PC-9 (cell line): ENCODE measurements at regions of chr6 and their contacts with region 1.

Region 1: DNA sequence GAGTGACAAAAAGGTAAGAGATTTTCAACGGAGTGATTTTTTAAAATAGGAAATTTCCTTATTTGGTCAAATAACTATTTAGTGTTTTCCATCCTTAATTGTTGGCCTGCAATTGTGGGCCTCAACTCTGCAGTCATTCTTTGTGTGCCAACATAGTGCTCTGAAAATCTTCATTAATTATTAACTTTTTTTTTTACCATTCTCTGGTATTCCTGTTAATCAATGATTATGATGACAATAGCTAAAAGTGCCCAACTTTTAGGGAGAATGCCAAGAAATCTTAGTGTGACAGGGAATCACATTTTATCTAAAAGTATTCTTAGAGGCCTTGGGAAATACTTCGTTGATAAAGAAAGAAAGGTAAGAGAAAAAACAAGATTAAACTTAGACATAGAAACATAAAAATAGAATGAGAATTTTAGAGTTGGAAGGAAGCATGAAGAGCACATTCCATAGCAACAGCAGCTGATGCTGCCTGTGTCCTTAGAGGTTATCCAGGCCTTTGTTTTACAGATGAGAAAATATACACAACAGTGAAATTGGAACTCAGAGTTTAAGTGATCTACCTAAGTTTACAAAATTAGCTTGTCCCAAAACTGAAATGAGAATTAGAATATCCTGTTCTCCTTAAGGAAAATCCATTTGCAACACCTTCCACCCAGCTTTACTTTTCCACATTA is 1.2 kb downstream of the GPRC6A start:
- DNase-seq: no peak
- H3K4me3 ChIP-seq: no peak overlapping the region
- H3K27ac ChIP-seq: no peak overlapping the region
- H3K4me1 ChIP-seq: no peaks in the 10 kb centered on the region
- H3K27me3 ChIP-seq: no peaks in the 10 kb centered on the region
- CTCF ChIP-seq: no peak

Region 2: DNA sequence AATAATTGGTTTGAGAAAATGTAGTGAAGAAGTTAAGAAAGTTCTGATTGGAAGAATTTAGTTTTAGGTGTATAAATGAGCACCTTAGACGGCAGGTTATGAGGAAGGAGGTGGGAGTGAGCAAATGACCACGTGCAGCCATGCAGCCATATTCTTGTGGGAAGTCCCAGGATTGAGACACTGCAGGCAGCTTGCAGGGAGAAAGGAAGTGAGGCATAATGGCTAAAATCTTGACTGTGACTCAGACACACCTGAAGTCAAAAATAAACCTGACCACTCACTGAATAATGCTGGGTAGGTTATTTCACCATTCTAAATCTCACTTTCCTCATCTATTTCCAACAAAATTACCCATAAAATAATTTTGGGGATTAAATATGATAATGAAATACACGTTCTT is 440.3 kb before region 1 on chr6:
- CTCF ChIA-PET with region 1: no interaction called
- POLR2A ChIA-PET with region 1: no interaction called
- intact Hi-C with region 1: no loop called
- DNase-seq: peak; percentile 29 to 76
- H3K4me3 ChIP-seq: peak overlapping the region; percentile 29; the same call in 1 of the 2 replicates
- H3K27ac ChIP-seq: peak overlapping the region; percentile 92
- H3K4me1 ChIP-seq: peaks cover 44% of the 10 kb centered on the region
- H3K27me3 ChIP-seq: no peaks in the 10 kb centered on the region
- CTCF ChIP-seq: no peak

Region 3: GRCh38 chr6:116764961-116765851 is 62.5 kb before region 1 on chr6 and contains the start of gene FAM162B:
- CTCF ChIA-PET with region 1: no interaction called
- POLR2A ChIA-PET with region 1: interaction called, 13 read pairs
- intact Hi-C with region 1: no loop called
- DNase-seq: no peak
- H3K4me3 ChIP-seq: no peak within 1 kb of the TSS
- H3K27ac ChIP-seq: no peak within 1 kb of the TSS
- H3K4me1 ChIP-seq: no peaks in the 10 kb centered on the region
- H3K27me3 ChIP-seq: no peaks in the 10 kb centered on the region
- CTCF ChIP-seq: no peak
- total RNA-seq, gene FAM162B: not detected in 2 replicates

Region 4: GRCh38 chr6:117298941-117299340 is 471.2 kb after region 1 on chr6:
- CTCF ChIA-PET with region 1: no interaction called
- POLR2A ChIA-PET with region 1: no interaction called
- intact Hi-C with region 1: no loop called
- DNase-seq: no peak
- H3K4me3 ChIP-seq: no peak overlapping the region
- H3K27ac ChIP-seq: no peak overlapping the region
- H3K4me1 ChIP-seq: no peaks in the 10 kb centered on the region
- H3K27me3 ChIP-seq: no peaks in the 10 kb centered on the region
- CTCF ChIP-seq: no peak